ENCODE measurements at regions of chr17 and their contacts with region 1.

Region 1: GRCh38 chr17:81484195-81484979 is 28.2 kb downstream of the ACTG1 start:
- DNase-seq: peak; percentile 74 to 91 (median 86)
- ATAC-seq: peak; percentile 73
- H3K4me3 ChIP-seq: peak overlapping the region; percentile 39
- H3K4me3 Mint-ChIP-seq: no peak overlapping the region
- H3K27ac ChIP-seq: no peak overlapping the region
- H3K27ac Mint-ChIP-seq: no peak overlapping the region
- H3K4me1 ChIP-seq: peaks cover 55% of the 10 kb centered on the region
- H3K4me1 Mint-ChIP-seq: peaks cover 7% of the 10 kb centered on the region
- H3K27me3 ChIP-seq: peaks cover 25 to 31% of the 10 kb centered on the region in 2 experiments
- H3K27me3 Mint-ChIP-seq: peaks cover 24% of the 10 kb centered on the region
- CTCF ChIP-seq: peak; percentile 96

Region 2: DNA sequence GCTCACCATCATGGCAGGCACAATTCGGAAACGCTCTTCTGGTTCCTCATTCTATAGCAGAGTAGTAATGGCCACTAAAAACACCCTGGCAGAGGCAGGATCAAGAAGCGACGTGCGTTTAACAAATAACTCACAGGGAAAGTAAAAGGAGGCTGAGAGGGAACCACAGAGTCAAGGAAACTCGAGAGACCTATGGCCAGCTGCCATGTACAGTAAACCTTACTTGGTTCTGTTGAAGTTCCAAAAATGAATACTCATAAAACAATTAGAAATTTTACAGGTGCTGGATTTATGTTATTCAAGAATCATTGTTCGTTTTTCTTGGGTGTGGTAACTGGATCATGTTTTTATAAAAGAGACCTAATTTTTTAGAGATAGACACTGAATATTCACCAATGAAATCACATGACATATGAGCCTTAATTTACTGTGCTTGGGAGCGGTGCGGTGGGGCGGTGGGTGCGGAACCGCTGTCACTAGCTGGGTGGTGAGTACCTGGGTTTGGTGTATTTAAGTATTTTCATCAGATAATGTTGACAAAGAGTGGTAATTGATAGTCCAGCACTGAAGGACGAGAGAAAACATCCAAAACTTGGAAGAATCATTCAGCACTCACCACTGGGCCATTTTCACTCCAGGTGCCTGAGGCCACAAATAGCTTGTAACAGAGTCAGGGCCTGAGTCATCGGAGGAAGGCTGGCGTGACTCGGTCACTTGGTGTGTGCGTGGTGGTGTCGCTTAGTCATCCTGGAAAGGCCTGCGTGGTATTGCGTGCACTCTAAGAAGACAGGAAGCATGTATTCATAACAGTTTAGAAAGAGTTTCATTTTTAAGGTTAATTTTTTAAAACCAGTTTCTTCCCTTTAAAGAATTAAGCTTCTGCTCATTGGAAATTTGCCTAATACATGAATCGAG is 628.2 kb before region 1 on chr17:
- CTCF ChIA-PET with region 1: no interaction called
- POLR2A ChIA-PET with region 1: no interaction called
- intact Hi-C with region 1: no loop called
- DNase-seq: peak; percentile 29 to 88 (median 68)
- ATAC-seq: peak; percentile 96
- H3K4me3 ChIP-seq: no peak overlapping the region
- H3K4me3 Mint-ChIP-seq: peak overlapping the region; percentile 2
- H3K27ac ChIP-seq: peak overlapping the region in 1 of 2 donors; percentile 28
- H3K27ac Mint-ChIP-seq: peak overlapping the region; percentile 75
- H3K4me1 ChIP-seq: peaks cover 38% of the 10 kb centered on the region
- H3K4me1 Mint-ChIP-seq: peaks cover 33% of the 10 kb centered on the region
- H3K27me3 ChIP-seq: no peaks in the 10 kb centered on the region
- H3K27me3 Mint-ChIP-seq: no peaks in the 10 kb centered on the region
- CTCF ChIP-seq: no peak

Region 3: GRCh38 chr17:80991645-80992076 is 492.7 kb before region 1 on chr17 and contains the start of gene CHMP6:
- CTCF ChIA-PET with region 1: no interaction called
- POLR2A ChIA-PET with region 1: no interaction called
- intact Hi-C with region 1: loop called in 1 of 2 experiments (anchors 10 kb)
- DNase-seq: peak; percentile 45 to 87 (median 66)
- ATAC-seq: peak; percentile 70
- H3K4me3 ChIP-seq: peak within 1 kb of the TSS; percentile 77
- H3K4me3 Mint-ChIP-seq: peak within 1 kb of the TSS; percentile 87
- H3K27ac ChIP-seq: peak within 1 kb of the TSS in 1 of 2 donors; percentile 41
- H3K27ac Mint-ChIP-seq: peak within 1 kb of the TSS; percentile 84
- H3K4me1 ChIP-seq: peaks cover 43% of the 10 kb centered on the region
- H3K4me1 Mint-ChIP-seq: peaks cover 21% of the 10 kb centered on the region
- H3K27me3 ChIP-seq: no peaks in the 10 kb centered on the region
- H3K27me3 Mint-ChIP-seq: peaks cover 4% of the 10 kb centered on the region
- CTCF ChIP-seq: no peak
- total RNA-seq, gene CHMP6: 11.5 to 13.3 TPM

Region 4: DNA sequence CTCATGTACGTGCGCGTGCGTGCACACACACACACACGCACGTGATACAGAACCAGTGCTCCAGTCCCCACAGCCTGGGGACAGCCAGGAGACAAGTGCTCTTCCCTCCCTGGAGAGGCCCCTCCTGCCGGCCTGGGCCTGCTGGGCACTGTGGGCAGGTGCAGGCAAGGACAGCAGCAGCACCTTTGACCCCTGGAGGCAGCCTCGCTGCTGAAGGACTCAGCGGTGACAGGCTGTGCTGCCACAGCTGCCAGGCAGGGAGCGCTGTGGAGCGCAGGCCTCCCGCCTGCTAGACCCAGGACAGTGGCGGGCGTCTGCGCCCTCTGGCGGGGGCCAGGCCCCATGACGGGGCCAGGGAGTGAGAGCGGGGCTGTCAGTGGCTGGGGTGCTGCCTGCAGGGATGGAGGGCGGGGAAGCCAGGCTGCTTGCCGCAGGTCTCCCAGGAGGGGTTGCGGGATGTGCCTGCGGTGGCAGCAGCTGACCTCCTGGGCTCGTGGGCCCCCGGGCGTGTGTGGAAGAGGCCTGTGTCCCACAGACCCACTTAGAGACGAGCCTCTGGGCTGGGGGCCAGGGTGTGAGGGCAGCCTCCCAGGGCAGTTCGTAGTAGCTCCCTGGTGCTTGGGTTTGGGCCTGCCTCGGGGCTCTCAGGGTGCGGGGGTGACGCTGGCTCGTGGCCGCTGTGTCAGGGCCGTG is 382.6 kb before region 1 on chr17:
- CTCF ChIA-PET with region 1: interaction called, 3 read pairs
- POLR2A ChIA-PET with region 1: no interaction called
- intact Hi-C with region 1: loop called in 1 of 2 experiments (anchors 2 kb)
- DNase-seq: peak; percentile 80 to 93 (median 88)
- ATAC-seq: peak; percentile 100
- H3K4me3 ChIP-seq: no peak overlapping the region
- H3K4me3 Mint-ChIP-seq: peak overlapping the region; percentile 34
- H3K27ac ChIP-seq: no peak overlapping the region
- H3K27ac Mint-ChIP-seq: no peak overlapping the region
- H3K4me1 ChIP-seq: peaks cover 40% of the 10 kb centered on the region
- H3K4me1 Mint-ChIP-seq: peaks cover 3% of the 10 kb centered on the region
- H3K27me3 ChIP-seq: no peaks in the 10 kb centered on the region
- H3K27me3 Mint-ChIP-seq: no peaks in the 10 kb centered on the region
- CTCF ChIP-seq: peak; percentile 100

Region 5: GRCh38 chr17:81222906-81223761 is 261.3 kb before region 1 on chr17 and contains the start of gene CEP131:
- CTCF ChIA-PET with region 1: no interaction called
- POLR2A ChIA-PET with region 1: no interaction called
- intact Hi-C with region 1: loop called in 1 of 2 experiments (anchors 1 kb)
- DNase-seq: peak; percentile 97 to 100 (median 100)
- ATAC-seq: peak; percentile 95
- H3K4me3 ChIP-seq: peak within 1 kb of the TSS; percentile 65
- H3K4me3 Mint-ChIP-seq: peak within 1 kb of the TSS; percentile 87
- H3K27ac ChIP-seq: no peak within 1 kb of the TSS
- H3K27ac Mint-ChIP-seq: no peak within 1 kb of the TSS
- H3K4me1 ChIP-seq: peaks cover 25% of the 10 kb centered on the region
- H3K4me1 Mint-ChIP-seq: peaks cover 23% of the 10 kb centered on the region
- H3K27me3 ChIP-seq: no peaks in the 10 kb centered on the region
- H3K27me3 Mint-ChIP-seq: no peaks in the 10 kb centered on the region
- CTCF ChIP-seq: no peak
- total RNA-seq, gene CEP131: 11.2 to 12.3 TPM

Region 6: GRCh38 chr17:81253358-81254131 is 230.8 kb before region 1 on chr17:
- CTCF ChIA-PET with region 1: interaction called, 5 read pairs
- POLR2A ChIA-PET with region 1: no interaction called
- intact Hi-C with region 1: loop called (anchors 1 kb)
- DNase-seq: peak; percentile 47 to 83 (median 58)
- ATAC-seq: peak; percentile 96
- H3K4me3 ChIP-seq: no peak overlapping the region
- H3K4me3 Mint-ChIP-seq: no peak overlapping the region
- H3K27ac ChIP-seq: no peak overlapping the region
- H3K27ac Mint-ChIP-seq: no peak overlapping the region
- H3K4me1 ChIP-seq: no peaks in the 10 kb centered on the region
- H3K4me1 Mint-ChIP-seq: peaks cover 11% of the 10 kb centered on the region
- H3K27me3 ChIP-seq: no peaks in the 10 kb centered on the region
- H3K27me3 Mint-ChIP-seq: no peaks in the 10 kb centered on the region
- CTCF ChIP-seq: peak; percentile 80

Region 7: GRCh38 chr17:81394921-81395599 is 89.3 kb before region 1 on chr17 and contains the start of gene BAHCC1:
- CTCF ChIA-PET with region 1: no interaction called
- POLR2A ChIA-PET with region 1: interaction called, 3 read pairs
- intact Hi-C with region 1: loop called in 1 of 2 experiments (anchors 1 kb)
- DNase-seq: peak; percentile 53 to 90 (median 72)
- ATAC-seq: peak; percentile 70
- H3K4me3 ChIP-seq: peak within 1 kb of the TSS; percentile 12
- H3K4me3 Mint-ChIP-seq: peak within 1 kb of the TSS; percentile 76
- H3K27ac ChIP-seq: no peak within 1 kb of the TSS
- H3K27ac Mint-ChIP-seq: peak within 1 kb of the TSS; percentile 68
- H3K4me1 ChIP-seq: peaks cover 66% of the 10 kb centered on the region
- H3K4me1 Mint-ChIP-seq: peaks cover 30% of the 10 kb centered on the region
- H3K27me3 ChIP-seq: peaks cover 65 to 88% of the 10 kb centered on the region in 2 experiments
- H3K27me3 Mint-ChIP-seq: peaks cover 59% of the 10 kb centered on the region
- CTCF ChIP-seq: no peak
- total RNA-seq, gene BAHCC1: 0.20 to 0.41 TPM

Region 8: GRCh38 chr17:81440876-81441244 is 43.5 kb before region 1 on chr17:
- CTCF ChIA-PET with region 1: no interaction called
- POLR2A ChIA-PET with region 1: no interaction called
- intact Hi-C with region 1: no loop called
- DNase-seq: no peak
- ATAC-seq: no peak
- H3K4me3 ChIP-seq: no peak overlapping the region
- H3K4me3 Mint-ChIP-seq: no peak overlapping the region
- H3K27ac ChIP-seq: no peak overlapping the region
- H3K27ac Mint-ChIP-seq: no peak overlapping the region
- H3K4me1 ChIP-seq: peaks cover 5% of the 10 kb centered on the region
- H3K4me1 Mint-ChIP-seq: no peaks in the 10 kb centered on the region
- H3K27me3 ChIP-seq: peaks cover 0 to 10% of the 10 kb centered on the region in 2 experiments
- H3K27me3 Mint-ChIP-seq: peaks cover 4% of the 10 kb centered on the region
- CTCF ChIP-seq: no peak

Region 9: GRCh38 chr17:81542431-81543338 is 58.3 kb after region 1 on chr17:
- CTCF ChIA-PET with region 1: no interaction called
- POLR2A ChIA-PET with region 1: no interaction called
- intact Hi-C with region 1: no loop called
- DNase-seq: no peak
- ATAC-seq: no peak
- H3K4me3 ChIP-seq: no peak overlapping the region
- H3K4me3 Mint-ChIP-seq: no peak overlapping the region
- H3K27ac ChIP-seq: no peak overlapping the region
- H3K27ac Mint-ChIP-seq: no peak overlapping the region
- H3K4me1 ChIP-seq: peaks cover 1% of the 10 kb centered on the region
- H3K4me1 Mint-ChIP-seq: no peaks in the 10 kb centered on the region
- H3K27me3 ChIP-seq: peaks cover 4 to 7% of the 10 kb centered on the region in 2 experiments
- H3K27me3 Mint-ChIP-seq: peaks cover 6% of the 10 kb centered on the region
- CTCF ChIP-seq: no peak

Region 10: GRCh38 chr17:81553018-81553615 is 68.7 kb after region 1 on chr17:
- CTCF ChIA-PET with region 1: no interaction called
- POLR2A ChIA-PET with region 1: no interaction called
- intact Hi-C with region 1: loop called (anchors 2 kb)
- DNase-seq: peak; percentile 48 to 92 (median 72)
- ATAC-seq: peak; percentile 74
- H3K4me3 ChIP-seq: peak overlapping the region; percentile 94
- H3K4me3 Mint-ChIP-seq: peak overlapping the region; percentile 94
- H3K27ac ChIP-seq: peak overlapping the region; percentile 79 to 83
- H3K27ac Mint-ChIP-seq: peak overlapping the region; percentile 93
- H3K4me1 ChIP-seq: peaks cover 41% of the 10 kb centered on the region
- H3K4me1 Mint-ChIP-seq: peaks cover 30% of the 10 kb centered on the region
- H3K27me3 ChIP-seq: no peaks in the 10 kb centered on the region
- H3K27me3 Mint-ChIP-seq: no peaks in the 10 kb centered on the region
- CTCF ChIP-seq: peak; percentile 0

Measured in CD4-positive, alpha-beta T cell (primary cell).